Esophagus squamous epithelium (tissue), 5 donors: ENCODE measurements at regions of chr10 and their contacts with region 1.

Region 1: GRCh38 chr10:77970869-77971803 is 44.6 kb upstream of the DLG5 start:
- DNase-seq: no peak
- H3K4me3 ChIP-seq: no peak overlapping the region
- H3K27ac ChIP-seq: peak overlapping the region; percentile 43 to 87 (median 78)
- H3K4me1 ChIP-seq: peaks cover 0 to 24% (median 3%) of the 10 kb centered on the region in 3 donors
- H3K27me3 ChIP-seq: no peaks in the 10 kb centered on the region
- CTCF ChIP-seq: no peak
- POLR2A ChIP-seq: no peak

Region 2: GRCh38 chr10:77846718-77847630 is 124.2 kb before region 1 on chr10:
- intact Hi-C with region 1: loop called (anchors 10 kb)
- DNase-seq: no peak
- H3K4me3 ChIP-seq: peak overlapping the region in 1 of 4 donors; percentile 1
- H3K27ac ChIP-seq: peak overlapping the region; percentile 13 to 77 (median 73)
- H3K4me1 ChIP-seq: peaks cover 9 to 49% (median 22%) of the 10 kb centered on the region in 3 donors
- H3K27me3 ChIP-seq: no peaks in the 10 kb centered on the region
- CTCF ChIP-seq: peak; percentile 89 to 98 (median 97)
- POLR2A ChIP-seq: no peak

Region 3: DNA sequence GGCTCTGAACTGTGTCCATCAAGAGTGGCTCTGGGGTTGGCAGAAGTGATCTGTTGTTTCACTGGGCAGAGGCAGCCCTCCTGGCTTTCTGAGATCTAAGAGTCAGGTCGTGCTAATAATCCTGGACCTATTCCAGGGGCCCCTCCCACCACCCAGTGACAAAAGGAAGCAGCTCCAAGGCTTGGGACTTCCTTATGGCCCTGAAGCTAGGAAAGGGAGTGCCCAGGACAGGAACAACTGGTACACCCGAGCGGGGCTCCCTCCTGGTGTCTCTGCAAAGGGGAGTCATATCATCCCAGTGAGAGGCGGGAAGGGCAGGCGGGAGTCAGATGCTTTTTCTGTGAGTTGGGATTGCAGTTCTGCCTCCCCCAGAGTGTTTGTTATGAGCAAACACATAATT is 94.9 kb after region 1 on chr10:
- intact Hi-C with region 1: no loop called
- DNase-seq: no peak
- H3K4me3 ChIP-seq: no peak overlapping the region
- H3K27ac ChIP-seq: no peak overlapping the region
- H3K4me1 ChIP-seq: peaks cover 0 to 11% (median 0%) of the 10 kb centered on the region in 3 donors
- H3K27me3 ChIP-seq: peaks cover 0 to 3% (median 0%) of the 10 kb centered on the region in 4 donors
- CTCF ChIP-seq: no peak
- POLR2A ChIP-seq: no peak

Region 4: GRCh38 chr10:78196964-78197363 is 225.8 kb after region 1 on chr10:
- intact Hi-C with region 1: no loop called
- DNase-seq: no peak
- H3K4me3 ChIP-seq: no peak overlapping the region
- H3K27ac ChIP-seq: no peak overlapping the region
- H3K4me1 ChIP-seq: no peaks in the 10 kb centered on the region
- H3K27me3 ChIP-seq: peaks cover 0 to 5% (median 0%) of the 10 kb centered on the region in 4 donors
- CTCF ChIP-seq: no peak
- POLR2A ChIP-seq: no peak